ENCODE measurements at regions of chr17 and their contacts with region 1.

Region 1: DNA sequence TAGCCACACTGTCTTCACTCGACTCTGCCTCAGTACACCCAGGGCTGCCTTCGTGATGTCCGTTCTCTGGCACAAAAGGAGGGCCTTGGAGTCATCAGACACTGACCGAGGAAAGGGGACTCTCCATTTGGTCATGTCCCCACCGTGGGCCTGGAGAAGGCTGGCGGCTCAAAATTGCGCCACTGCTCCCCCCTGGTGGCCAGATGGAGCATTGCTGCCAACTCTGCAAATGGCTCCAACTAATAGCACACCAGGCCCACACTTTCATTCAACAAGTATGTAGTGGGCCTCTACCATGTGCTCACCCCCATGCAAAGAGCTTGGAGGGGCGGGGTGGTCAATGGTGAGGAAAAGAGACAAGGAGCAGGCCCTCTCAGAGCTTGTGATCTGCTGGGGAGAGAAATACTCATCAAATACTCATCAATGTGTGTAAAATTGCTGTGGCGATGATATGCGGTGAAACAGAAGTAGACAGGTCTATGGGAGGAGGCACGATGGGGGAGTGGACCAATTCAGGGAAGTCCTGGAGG is 5.2 kb upstream of the GRIN2C start:
- DNase-seq: peak in 1 of 2 experiments; percentile 95
- H3K4me3 ChIP-seq: no peak overlapping the region
- H3K27ac ChIP-seq: no peak overlapping the region
- H3K4me1 ChIP-seq: peaks cover 0 to 7% (median 5%) of the 10 kb centered on the region in 4 experiments; a peak in 4 of 7 replicates
- H3K27me3 ChIP-seq: peaks cover 21 to 23% (median 21%) of the 10 kb centered on the region in 4 experiments
- CTCF ChIP-seq: peak; percentile 92 to 97 (median 96)
- EP300 ChIP-seq: no peak
- POLR2A ChIP-seq: no peak
- RAD21 ChIP-seq: peak; percentile 81 to 86

Region 2: GRCh38 chr17:74852237-74853047 is 12.5 kb before region 1 on chr17:
- CTCF ChIA-PET with region 1: interaction called, 2,981 read pairs
- POLR2A ChIA-PET with region 1: interaction called, 14 read pairs
- DNase-seq: peak; percentile 71 to 86
- H3K4me3 ChIP-seq: peak overlapping the region; percentile 40 to 70 (median 59)
- H3K27ac ChIP-seq: no peak overlapping the region
- H3K4me1 ChIP-seq: peaks cover 0 to 7% (median 3%) of the 10 kb centered on the region in 4 experiments; a peak in 5 of 7 replicates
- H3K27me3 ChIP-seq: peaks cover 26 to 92% (median 72%) of the 10 kb centered on the region in 4 experiments
- CTCF ChIP-seq: no peak
- EP300 ChIP-seq: no peak
- POLR2A ChIP-seq: no peak
- RAD21 ChIP-seq: no peak

Region 3: DNA sequence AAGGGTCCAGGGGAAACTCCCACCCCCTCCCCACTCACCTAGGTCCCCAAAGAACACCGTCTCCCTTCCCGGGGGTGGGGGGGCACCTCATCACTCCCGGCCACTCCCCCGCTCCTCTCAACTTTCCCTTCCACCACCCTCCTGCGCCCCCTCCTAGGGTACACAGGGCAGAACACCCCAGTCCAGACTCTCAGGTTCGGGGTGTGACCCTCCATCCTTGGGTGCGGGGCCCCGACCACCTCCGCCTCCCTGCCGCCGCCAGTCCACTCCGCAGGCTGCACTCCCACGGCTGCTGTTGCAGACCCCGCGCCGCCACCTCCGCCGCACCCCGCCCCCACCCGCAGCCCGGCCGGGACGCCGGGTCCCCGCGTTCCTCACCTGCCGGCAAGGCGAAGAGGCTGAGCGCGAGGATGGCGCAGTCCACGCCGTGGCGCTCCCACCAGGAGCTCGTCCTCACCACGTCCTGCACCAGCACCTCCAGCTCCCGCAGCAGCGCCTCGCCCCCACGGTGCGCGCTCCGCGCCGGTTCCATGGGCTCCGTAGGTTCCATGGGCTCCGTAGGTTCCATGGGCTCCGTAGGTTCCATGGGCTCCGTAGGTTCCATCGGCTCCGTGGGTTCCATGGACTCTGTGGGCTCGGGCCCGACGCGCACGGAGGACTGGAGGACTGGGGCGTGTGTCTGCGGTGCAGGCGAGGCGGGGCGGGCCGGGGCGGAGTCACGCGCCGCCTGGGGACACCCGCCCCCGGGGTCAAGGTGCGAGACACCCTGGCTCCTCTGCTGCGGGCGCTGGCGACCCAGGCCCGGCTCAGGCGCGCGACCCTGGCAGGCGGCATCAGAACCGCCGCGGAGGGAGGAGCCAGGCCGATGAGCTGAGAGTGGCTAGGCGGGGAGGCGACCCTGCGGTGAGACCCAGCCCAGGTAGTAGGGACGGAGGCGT is 28.3 kb after region 1 on chr17 and contains the start of gene FADS6:
- CTCF ChIA-PET with region 1: interaction called, 12 read pairs
- POLR2A ChIA-PET with region 1: interaction called, 4 read pairs
- DNase-seq: no peak
- H3K4me3 ChIP-seq: peak within 1 kb of the TSS; percentile 61 to 75 (median 64)
- H3K27ac ChIP-seq: no peak within 1 kb of the TSS
- H3K4me1 ChIP-seq: peaks cover 0 to 10% (median 4%) of the 10 kb centered on the region in 4 experiments; a peak in 4 of 7 replicates
- H3K27me3 ChIP-seq: peaks cover 16 to 43% (median 37%) of the 10 kb centered on the region in 4 experiments; a peak in 6 of 7 replicates
- CTCF ChIP-seq: no peak
- EP300 ChIP-seq: no peak
- POLR2A ChIP-seq: no peak
- RAD21 ChIP-seq: no peak
- total RNA-seq, gene FADS6: 0.56 and 0.80 TPM in 2 replicates

Region 4: DNA sequence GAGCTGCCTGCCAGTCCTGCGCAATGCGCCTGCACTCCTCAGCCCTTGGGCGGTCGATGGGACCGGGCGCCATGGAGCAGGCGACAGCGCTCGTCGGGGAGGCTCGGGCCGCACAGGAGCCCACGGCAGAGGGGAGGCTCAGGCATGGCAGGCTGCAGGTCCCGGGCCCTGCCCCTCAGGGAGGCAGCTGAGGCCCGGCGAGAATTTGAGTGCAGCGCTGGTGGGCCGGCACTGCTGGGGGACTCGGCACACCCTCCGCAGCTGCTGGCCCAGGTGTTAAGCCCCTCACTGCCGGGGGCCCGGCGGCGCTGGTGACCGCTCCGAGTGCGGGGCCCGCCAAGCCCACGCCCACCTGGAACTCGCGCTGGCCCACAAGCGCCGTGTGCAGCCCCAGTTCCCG is 42.1 kb after region 1 on chr17:
- CTCF ChIA-PET with region 1: interaction called, 16 read pairs
- POLR2A ChIA-PET with region 1: no interaction called
- DNase-seq: no peak
- H3K4me3 ChIP-seq: no peak overlapping the region
- H3K27ac ChIP-seq: no peak overlapping the region
- H3K4me1 ChIP-seq: peaks cover 5 to 18% (median 14%) of the 10 kb centered on the region in 4 experiments
- H3K27me3 ChIP-seq: peaks cover 0 to 2% (median under 1%) of the 10 kb centered on the region in 4 experiments; a peak in 3 of 7 replicates
- CTCF ChIP-seq: no peak
- EP300 ChIP-seq: no peak
- POLR2A ChIP-seq: no peak
- RAD21 ChIP-seq: no peak

Region 5: GRCh38 chr17:74923533-74924249 is 58.8 kb after region 1 on chr17:
- CTCF ChIA-PET with region 1: interaction called, 80 read pairs
- POLR2A ChIA-PET with region 1: interaction called, 3 read pairs
- DNase-seq: peak in 1 of 2 experiments; percentile 89
- H3K4me3 ChIP-seq: peak overlapping the region; percentile 33 to 74 (median 36)
- H3K27ac ChIP-seq: no peak overlapping the region
- H3K4me1 ChIP-seq: peaks cover 0 to 19% (median 16%) of the 10 kb centered on the region in 4 experiments; a peak in 6 of 7 replicates
- H3K27me3 ChIP-seq: peaks cover 40 to 62% (median 53%) of the 10 kb centered on the region in 4 experiments
- CTCF ChIP-seq: peak; percentile 71 to 93 (median 80)
- EP300 ChIP-seq: no peak
- POLR2A ChIP-seq: no peak
- RAD21 ChIP-seq: peak; percentile 73 to 79

Region 6: DNA sequence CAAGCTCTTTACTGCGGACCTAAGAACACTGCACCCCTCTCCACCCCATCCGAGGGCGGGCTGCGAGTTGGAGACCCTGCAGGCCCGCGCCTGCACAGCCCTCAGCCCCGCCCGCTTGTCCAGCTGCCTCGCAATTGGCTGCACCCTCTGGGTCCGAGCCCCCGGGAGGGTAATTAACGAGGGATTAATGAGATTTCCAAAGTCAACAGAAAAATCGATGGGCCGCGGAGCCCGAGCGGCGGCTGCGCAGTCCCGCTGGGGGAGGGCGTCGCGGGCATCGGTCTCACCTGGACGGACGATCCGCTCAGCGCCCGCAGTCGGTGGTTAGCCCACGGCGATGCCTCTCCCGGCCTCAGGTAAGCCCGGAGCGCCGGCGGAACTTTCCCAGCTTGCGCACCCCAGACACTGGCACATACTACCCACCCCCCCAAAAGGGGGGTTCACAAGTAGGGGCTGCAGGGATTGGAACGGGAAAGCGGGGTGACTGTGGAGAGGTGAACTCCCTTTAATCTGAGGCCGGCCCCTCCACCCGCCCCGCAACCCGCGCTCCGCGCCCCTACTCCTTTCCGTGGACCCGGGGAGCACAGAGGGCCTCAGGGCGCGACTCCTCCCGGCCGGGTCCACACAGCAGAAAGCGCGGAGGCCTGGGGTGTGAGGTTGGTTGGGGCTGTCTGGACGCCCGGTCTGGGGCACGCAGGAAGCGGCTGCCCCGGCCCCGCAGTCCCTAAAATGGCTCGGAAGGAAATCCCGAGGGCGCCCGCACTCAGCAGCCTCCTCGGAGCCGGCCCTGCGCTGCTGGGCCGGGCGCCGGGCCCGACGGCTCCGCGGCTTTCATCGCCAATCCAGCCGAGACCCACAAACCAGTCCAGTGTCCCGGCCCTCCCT is 70.9 kb after region 1 on chr17 and contains the start of gene OTOP3:
- CTCF ChIA-PET with region 1: interaction called, 11 read pairs
- POLR2A ChIA-PET with region 1: interaction called, 3 read pairs
- DNase-seq: no peak
- H3K4me3 ChIP-seq: peak within 1 kb of the TSS; percentile 28 to 54 (median 36)
- H3K27ac ChIP-seq: no peak within 1 kb of the TSS
- H3K4me1 ChIP-seq: peaks cover 0 to 6% (median 5%) of the 10 kb centered on the region in 4 experiments; a peak in 4 of 7 replicates
- H3K27me3 ChIP-seq: peaks cover 22 to 59% (median 52%) of the 10 kb centered on the region in 4 experiments
- CTCF ChIP-seq: no peak
- EP300 ChIP-seq: no peak
- POLR2A ChIP-seq: no peak
- RAD21 ChIP-seq: no peak
- total RNA-seq, gene OTOP3: not detected in 2 replicates